Dendritic cell treated with granulocyte-macrophage colony-stimulating factor and Interleukin-4, amounts not matched to agents 40 ng/mL and 50 ng/mL, for 4 days (primary cell): ENCODE measurements at regions of chr12 and their contacts with region 1.

Region 1: GRCh38 chr12:120234643-120235368 is 30.7 kb downstream of the PXN start:
- H3K4me3 Mint-ChIP-seq: peak overlapping the region; percentile 21
- H3K27ac Mint-ChIP-seq: peak overlapping the region; percentile 84
- H3K4me1 Mint-ChIP-seq: peaks cover 96% of the 10 kb centered on the region
- H3K27me3 Mint-ChIP-seq: no peaks in the 10 kb centered on the region

Region 2: DNA sequence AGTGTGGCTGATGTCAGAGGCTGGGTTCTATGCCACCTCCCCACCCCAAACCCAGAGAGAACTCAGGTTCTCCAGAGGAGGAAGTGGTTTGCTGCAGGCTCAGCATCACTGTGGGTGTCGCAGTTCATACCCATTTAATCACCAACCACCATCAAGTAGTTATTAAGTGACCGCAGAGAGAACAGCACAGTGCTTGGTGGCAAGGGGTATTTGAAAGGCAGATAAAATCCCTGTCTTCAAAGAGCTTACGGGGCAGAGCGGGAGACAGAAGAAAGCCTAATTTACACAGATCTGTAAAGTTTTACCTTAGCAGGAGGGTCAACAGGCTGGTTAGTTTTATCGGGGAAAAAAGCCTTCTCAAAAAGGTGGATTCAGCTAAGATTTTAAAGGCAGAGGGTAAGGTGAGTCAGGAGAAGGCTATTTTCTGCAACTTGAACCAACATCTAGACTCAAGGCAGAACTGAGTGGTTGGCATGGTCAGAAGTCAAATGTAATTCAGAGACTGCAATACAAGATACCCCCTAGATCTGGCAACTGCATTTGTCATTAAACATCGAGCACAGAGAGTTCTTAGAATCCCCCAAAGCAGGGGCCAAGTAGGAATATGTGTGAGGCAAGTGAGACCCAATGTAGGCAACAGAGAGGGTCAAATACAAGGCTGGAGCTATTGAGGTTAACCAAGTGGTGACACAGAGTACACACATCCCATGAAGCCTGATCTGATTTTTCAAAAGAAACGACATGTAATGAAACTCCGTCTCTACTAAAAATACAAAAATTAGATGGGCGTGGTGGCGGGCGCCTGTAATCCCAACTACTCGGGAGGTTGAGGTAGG is 17.5 kb after region 1 on chr12:
- intact Hi-C with region 1: loop called (anchors 2 kb)
- H3K4me3 Mint-ChIP-seq: peak overlapping the region; percentile 58
- H3K27ac Mint-ChIP-seq: peak overlapping the region; percentile 90
- H3K4me1 Mint-ChIP-seq: peaks cover 93% of the 10 kb centered on the region
- H3K27me3 Mint-ChIP-seq: no peaks in the 10 kb centered on the region